ENCODE measurements at regions of chr17 and their contacts with region 1.

Region 1: DNA sequence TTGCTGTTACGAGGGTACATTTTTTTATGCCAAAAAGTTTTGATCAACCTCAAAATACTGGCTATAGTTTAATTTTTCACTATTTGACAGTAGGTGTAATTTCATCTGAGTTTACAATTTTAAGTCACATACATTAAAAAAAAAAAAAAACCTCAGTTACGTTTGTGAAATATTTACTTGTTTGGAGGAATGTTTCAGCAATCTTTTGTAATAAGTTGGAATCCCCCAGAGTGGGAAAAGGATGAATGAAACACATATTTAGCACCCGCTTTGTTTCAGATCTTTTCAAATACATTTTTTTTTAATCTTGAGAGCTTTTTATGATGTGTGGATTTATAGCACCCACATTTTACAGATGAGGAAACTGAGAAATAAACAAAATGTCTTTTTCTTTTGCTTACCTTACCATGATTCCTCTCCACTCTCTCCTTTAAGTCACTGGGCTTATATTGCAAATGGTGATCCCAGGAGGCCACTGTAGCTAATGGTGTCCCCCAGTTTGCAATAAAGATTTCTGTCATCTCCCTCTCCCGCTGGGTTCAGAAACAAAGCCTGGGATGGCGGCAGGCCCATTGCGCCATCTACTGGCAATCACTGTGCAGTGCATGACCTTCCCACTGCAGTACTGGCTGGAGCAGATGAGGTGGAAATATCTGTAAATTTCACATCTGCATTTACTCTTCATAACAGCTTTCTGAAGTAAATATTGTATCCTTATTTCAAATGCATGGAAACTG is 27.7 kb downstream of the TBC1D3B start:
- DNase-seq: peak; percentile 76 to 83
- ATAC-seq: peak; percentile 92 to 98 (median 94)
- H3K4me3 ChIP-seq: peak overlapping the region; percentile 37
- H3K4me3 Mint-ChIP-seq: peak overlapping the region; percentile 92
- H3K27ac ChIP-seq: peak overlapping the region; percentile 45
- H3K27ac Mint-ChIP-seq: peak overlapping the region; percentile 78 to 88
- H3K4me1 ChIP-seq: peaks cover 33% of the 10 kb centered on the region
- H3K4me1 Mint-ChIP-seq: peaks cover 64 to 69% of the 10 kb centered on the region in 2 donors
- H3K27me3 ChIP-seq: no peaks in the 10 kb centered on the region
- H3K27me3 Mint-ChIP-seq: peaks cover 0 to 3% of the 10 kb centered on the region in 2 donors
- CTCF ChIP-seq: peak; percentile 100

Region 2: GRCh38 chr17:35842239-35842638 is 306.5 kb before region 1 on chr17:
- intact Hi-C with region 1: no loop called
- DNase-seq: no peak
- ATAC-seq: no peak
- H3K4me3 ChIP-seq: no peak overlapping the region
- H3K4me3 Mint-ChIP-seq: no peak overlapping the region
- H3K27ac ChIP-seq: no peak overlapping the region
- H3K27ac Mint-ChIP-seq: peak overlapping the region; percentile 20 to 47
- H3K4me1 ChIP-seq: no peaks in the 10 kb centered on the region
- H3K4me1 Mint-ChIP-seq: peaks cover 0 to 7% of the 10 kb centered on the region in 2 donors
- H3K27me3 ChIP-seq: no peaks in the 10 kb centered on the region
- H3K27me3 Mint-ChIP-seq: no peaks in the 10 kb centered on the region
- CTCF ChIP-seq: no peak

Region 3: DNA sequence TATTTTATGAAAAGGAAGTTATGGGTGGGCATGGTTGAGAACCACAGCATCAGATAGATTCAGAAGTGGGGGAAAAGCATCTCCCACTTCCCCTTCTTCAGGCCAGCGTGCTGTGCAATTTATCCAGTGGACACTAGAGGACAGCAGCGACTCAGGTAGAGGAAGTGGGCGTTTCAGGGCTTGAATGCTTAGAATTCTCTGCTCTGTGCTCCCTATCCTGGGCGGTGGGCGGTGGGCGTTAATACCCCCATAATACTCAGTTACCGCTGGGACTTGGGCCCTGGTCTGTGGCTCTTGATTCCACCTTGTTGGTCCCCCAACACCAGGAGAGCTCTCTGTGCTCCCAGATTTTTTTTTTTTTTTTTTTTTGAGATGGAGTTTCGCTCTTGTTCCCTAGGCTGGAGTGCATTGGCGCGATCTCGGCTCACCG is 201.6 kb before region 1 on chr17:
- intact Hi-C with region 1: loop called (anchors 1 kb)
- DNase-seq: peak; percentile 33 to 73
- ATAC-seq: peak; percentile 87 to 99 (median 98)
- H3K4me3 ChIP-seq: no peak overlapping the region
- H3K4me3 Mint-ChIP-seq: peak overlapping the region; percentile 9
- H3K27ac ChIP-seq: no peak overlapping the region
- H3K27ac Mint-ChIP-seq: peak overlapping the region in 1 of 2 donors; percentile 40
- H3K4me1 ChIP-seq: peaks cover 10% of the 10 kb centered on the region
- H3K4me1 Mint-ChIP-seq: peaks cover 7 to 21% of the 10 kb centered on the region in 2 donors
- H3K27me3 ChIP-seq: no peaks in the 10 kb centered on the region
- H3K27me3 Mint-ChIP-seq: no peaks in the 10 kb centered on the region
- CTCF ChIP-seq: peak; percentile 73

Region 4: GRCh38 chr17:36072431-36073121 is 76.2 kb before region 1 on chr17:
- intact Hi-C with region 1: loop called (anchors 5 kb)
- DNase-seq: peak; percentile 62 to 83
- ATAC-seq: peak; percentile 71 to 80 (median 79)
- H3K4me3 ChIP-seq: no peak overlapping the region
- H3K4me3 Mint-ChIP-seq: peak overlapping the region; percentile 51
- H3K27ac ChIP-seq: peak overlapping the region; percentile 51
- H3K27ac Mint-ChIP-seq: peak overlapping the region; percentile 95 to 96
- H3K4me1 ChIP-seq: peaks cover 51% of the 10 kb centered on the region
- H3K4me1 Mint-ChIP-seq: peaks cover 87 to 88% of the 10 kb centered on the region in 2 donors
- H3K27me3 ChIP-seq: no peaks in the 10 kb centered on the region
- H3K27me3 Mint-ChIP-seq: no peaks in the 10 kb centered on the region
- CTCF ChIP-seq: peak; percentile 87

Region 5: DNA sequence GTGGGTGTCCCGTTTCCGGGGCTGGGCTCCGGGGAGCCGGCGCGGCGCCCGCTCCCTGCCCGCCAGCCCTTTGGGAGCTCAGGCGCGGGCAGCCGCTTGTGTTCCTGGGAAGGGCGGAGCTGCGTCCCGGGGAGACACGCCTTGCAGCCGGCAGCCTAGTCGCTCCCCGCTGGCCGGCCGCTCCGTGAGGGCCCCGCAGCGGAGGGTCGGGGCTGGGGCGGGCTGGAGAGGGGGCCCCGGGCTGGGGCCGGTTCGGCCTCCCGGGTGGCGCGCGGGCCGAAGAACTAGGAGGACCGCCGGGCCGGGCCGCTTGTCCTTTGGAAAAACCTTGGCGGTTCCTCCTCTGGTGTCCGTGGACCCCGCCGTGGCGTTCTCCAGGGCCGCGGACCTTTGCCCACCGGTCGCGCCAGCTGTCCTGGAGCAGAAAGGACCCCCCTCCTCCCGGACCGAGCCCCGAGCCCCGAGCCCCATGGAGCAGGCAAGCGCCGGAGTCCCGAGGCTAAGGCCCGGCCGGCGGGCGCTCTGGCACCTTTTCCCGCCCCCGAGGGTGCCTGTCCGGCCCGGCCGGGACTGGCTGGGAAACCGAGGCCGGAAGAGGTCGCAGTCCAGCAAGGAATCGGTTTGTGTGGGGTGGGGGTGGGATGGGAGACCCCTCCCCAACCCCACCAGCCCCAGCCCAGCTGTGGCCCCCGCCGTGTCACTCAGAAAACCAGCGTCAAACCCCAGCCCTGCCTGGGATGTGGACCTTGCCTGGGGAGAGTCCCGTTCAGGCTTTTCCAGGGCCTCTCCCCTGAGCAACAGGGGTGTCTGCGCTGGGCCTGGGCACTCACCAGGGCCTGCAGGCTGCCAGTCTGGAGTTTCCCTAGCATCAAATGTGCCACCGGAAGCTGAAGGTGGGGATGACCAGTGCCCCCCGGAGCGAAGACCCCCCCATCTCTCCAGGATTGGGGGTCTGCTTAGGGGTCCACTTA is 34.6 kb after region 1 on chr17:
- intact Hi-C with region 1: loop called (anchors 5 kb)
- DNase-seq: peak; percentile 62 to 68
- ATAC-seq: peak; percentile 58 to 61 (median 59)
- H3K4me3 ChIP-seq: peak overlapping the region; percentile 28
- H3K4me3 Mint-ChIP-seq: peak overlapping the region; percentile 92
- H3K27ac ChIP-seq: no peak overlapping the region
- H3K27ac Mint-ChIP-seq: peak overlapping the region; percentile 93 to 98
- H3K4me1 ChIP-seq: peaks cover 62% of the 10 kb centered on the region
- H3K4me1 Mint-ChIP-seq: peaks cover 48 to 73% of the 10 kb centered on the region in 2 donors
- H3K27me3 ChIP-seq: peaks cover 9% of the 10 kb centered on the region
- H3K27me3 Mint-ChIP-seq: no peaks in the 10 kb centered on the region
- CTCF ChIP-seq: no peak

Measured in natural killer cell (primary cell).